ENCODE measurements at regions of chr3 and their contacts with region 1.

Region 1: DNA sequence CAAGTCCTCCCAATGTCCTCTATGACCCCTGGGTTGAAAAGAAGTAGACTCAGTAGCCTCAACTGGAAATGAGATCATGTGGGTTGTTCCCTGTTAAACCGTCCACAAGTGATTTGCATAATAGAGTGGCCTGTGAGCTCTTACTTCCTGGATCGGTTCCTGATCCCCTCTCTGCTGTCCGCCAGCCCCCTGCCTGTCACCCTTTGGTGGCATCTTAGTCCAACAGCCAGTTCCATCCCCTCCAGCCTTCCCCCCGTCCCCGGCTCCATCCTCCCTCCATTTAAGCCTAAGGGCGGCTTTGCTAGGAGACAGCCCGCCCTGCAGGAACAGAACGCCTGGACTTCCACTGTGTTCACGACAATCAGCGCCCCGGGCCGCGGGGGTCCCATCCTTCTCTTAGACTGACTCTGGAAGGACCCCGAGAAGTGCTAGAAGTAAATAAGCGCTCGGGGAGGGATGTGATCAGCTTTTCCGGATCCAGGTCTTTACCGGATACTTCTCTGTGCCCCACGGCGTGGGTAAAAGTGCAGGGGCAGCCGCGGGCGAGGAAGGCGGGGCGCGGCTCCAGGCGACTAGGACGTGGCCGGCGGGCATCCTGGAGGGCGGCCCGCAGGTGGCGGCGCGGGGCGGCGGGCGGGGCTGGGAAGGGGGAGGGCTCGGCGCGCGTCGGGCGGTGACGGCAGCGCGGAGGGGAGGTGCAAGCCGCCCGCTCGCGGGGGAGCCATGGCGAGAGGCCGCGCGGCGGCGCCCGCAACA is 51.2 kb upstream of the ULK4 start:
- DNase-seq: peak; percentile 66
- H3K4me3 Mint-ChIP-seq: peak overlapping the region; percentile 87
- H3K27ac Mint-ChIP-seq: peak overlapping the region; percentile 91
- H3K4me1 Mint-ChIP-seq: peaks cover 47% of the 10 kb centered on the region
- H3K27me3 Mint-ChIP-seq: no peaks in the 10 kb centered on the region

Region 2: GRCh38 chr3:40452876-40453730 is 1560.0 kb before region 1 on chr3:
- intact Hi-C with region 1: loop called (anchors 2 kb)
- DNase-seq: peak; percentile 95
- H3K4me3 Mint-ChIP-seq: peak overlapping the region; percentile 91
- H3K27ac Mint-ChIP-seq: peak overlapping the region; percentile 96
- H3K4me1 Mint-ChIP-seq: peaks cover 40% of the 10 kb centered on the region
- H3K27me3 Mint-ChIP-seq: no peaks in the 10 kb centered on the region

Region 3: DNA sequence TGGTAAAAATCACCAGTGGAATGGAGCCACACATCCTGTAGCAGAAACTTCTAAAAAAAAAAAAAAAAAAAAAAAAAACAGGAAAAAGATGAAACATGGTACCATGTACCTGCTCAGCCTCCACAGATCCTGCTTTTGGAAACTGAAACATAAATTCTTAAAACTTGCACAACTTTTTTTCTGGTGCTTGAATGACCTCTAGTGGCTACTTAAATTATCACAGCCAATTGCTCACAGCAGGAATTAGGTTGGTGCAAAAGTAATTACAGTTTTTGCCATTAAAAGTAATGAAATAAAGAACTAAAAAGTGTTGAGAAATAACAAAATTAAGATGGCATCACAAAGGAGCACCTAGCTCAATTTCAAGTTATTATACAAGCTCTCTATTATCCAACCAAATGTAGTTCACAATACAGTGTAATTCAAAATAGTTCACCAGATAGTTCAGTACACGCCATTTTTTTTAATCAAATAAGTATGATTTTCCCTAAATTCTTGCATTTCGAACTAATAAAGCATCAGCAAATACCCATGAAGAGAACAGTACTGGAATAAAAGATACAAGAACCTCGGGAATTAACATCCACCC is 131.8 kb before region 1 on chr3:
- intact Hi-C with region 1: no loop called
- DNase-seq: no peak
- H3K4me3 Mint-ChIP-seq: no peak overlapping the region
- H3K27ac Mint-ChIP-seq: no peak overlapping the region
- H3K4me1 Mint-ChIP-seq: no peaks in the 10 kb centered on the region
- H3K27me3 Mint-ChIP-seq: peaks cover 1% of the 10 kb centered on the region

Region 4: DNA sequence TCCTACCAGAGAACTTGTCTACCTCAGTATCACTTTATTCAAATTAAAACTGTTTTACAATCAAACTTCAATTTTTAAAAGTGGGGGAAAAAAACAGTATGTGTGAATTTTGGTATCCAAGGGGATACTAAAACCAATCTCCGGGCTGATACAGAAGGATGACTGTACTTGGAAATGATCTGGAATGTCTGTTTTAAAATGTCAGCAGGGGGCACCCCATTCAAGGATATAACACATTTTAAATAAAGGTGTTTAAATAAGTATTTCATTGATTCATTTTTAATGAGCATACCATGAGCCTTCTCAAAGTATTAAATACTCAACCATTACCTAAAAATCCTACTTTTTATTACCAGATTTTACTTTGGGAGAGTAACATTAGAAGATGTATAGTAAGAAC is 119.1 kb before region 1 on chr3:
- intact Hi-C with region 1: loop called (anchors 1 kb)
- DNase-seq: no peak
- H3K4me3 Mint-ChIP-seq: no peak overlapping the region
- H3K27ac Mint-ChIP-seq: no peak overlapping the region
- H3K4me1 Mint-ChIP-seq: no peaks in the 10 kb centered on the region
- H3K27me3 Mint-ChIP-seq: no peaks in the 10 kb centered on the region

Region 5: DNA sequence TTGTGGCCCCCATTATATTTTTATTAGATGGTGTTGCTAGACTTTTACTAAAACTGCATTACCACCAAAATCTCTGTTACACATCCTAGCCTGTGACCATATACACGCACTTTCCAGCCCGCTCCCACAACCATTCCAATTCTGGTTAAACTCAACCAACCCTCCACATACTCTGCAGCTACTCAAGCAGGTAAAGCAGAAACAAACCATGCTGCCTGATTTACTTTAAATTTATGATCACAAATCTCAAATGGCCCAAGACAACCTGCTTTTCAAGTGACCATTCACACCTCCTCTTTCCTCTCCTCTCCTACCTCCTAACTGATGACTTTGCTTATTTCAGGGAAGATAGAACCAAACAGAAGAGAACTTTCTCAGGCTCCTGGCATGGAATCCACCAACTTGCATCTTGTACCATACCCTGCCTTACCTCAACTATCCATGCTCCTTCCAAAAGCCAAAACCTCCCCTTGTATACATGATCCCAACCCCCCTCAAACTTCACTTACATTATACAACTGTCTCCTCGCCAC is 69.7 kb before region 1 on chr3:
- intact Hi-C with region 1: no loop called
- DNase-seq: no peak
- H3K4me3 Mint-ChIP-seq: no peak overlapping the region
- H3K27ac Mint-ChIP-seq: no peak overlapping the region
- H3K4me1 Mint-ChIP-seq: no peaks in the 10 kb centered on the region
- H3K27me3 Mint-ChIP-seq: no peaks in the 10 kb centered on the region

Region 6: DNA sequence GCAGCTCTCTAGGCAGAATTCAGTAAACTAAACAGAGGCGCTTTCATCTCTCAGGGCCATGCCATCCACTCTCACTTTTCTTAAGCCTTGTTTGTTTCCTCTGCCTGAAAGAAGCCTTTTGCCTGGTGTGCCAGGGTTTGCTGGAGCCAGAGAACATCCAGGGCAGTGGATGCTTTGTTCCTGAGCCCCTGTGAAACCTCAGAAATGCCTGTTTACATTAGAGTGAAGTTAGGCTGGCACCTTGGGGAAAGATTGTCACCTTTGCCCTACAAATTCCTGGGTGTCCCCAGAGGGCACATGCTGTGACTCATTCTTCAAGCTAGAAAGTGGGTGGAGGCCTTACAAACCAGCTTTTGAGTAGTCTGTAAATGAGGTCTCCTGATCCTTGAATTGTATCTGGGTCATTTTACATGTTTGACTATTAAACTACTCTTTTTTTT is 67.4 kb after region 1 on chr3:
- intact Hi-C with region 1: loop called (anchors 2 kb)
- DNase-seq: no peak
- H3K4me3 Mint-ChIP-seq: peak overlapping the region; percentile 38
- H3K27ac Mint-ChIP-seq: peak overlapping the region; percentile 84
- H3K4me1 Mint-ChIP-seq: peaks cover 51% of the 10 kb centered on the region
- H3K27me3 Mint-ChIP-seq: no peaks in the 10 kb centered on the region

Region 7: DNA sequence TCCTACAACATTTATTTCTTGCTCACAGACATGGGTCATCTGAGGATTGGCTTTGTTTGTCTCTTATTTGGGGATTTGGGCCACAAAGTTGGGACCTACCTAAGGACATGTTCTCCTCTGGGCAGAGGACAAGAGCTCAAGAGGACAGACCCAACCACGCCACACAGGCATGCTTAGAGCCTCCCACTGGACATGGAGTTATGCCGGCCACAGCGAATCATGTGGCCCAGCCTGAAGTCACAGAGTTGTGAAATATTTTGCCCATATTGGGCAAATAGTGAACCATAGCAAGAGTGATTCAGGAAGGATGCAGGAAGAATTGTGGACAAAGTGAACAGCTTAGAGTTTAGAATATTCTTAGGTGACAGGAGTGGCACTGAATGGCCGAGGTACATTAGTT is 87.9 kb after region 1 on chr3:
- intact Hi-C with region 1: loop called (anchors 1 kb)
- DNase-seq: no peak
- H3K4me3 Mint-ChIP-seq: no peak overlapping the region
- H3K27ac Mint-ChIP-seq: no peak overlapping the region
- H3K4me1 Mint-ChIP-seq: peaks cover 35% of the 10 kb centered on the region
- H3K27me3 Mint-ChIP-seq: no peaks in the 10 kb centered on the region

Region 8: DNA sequence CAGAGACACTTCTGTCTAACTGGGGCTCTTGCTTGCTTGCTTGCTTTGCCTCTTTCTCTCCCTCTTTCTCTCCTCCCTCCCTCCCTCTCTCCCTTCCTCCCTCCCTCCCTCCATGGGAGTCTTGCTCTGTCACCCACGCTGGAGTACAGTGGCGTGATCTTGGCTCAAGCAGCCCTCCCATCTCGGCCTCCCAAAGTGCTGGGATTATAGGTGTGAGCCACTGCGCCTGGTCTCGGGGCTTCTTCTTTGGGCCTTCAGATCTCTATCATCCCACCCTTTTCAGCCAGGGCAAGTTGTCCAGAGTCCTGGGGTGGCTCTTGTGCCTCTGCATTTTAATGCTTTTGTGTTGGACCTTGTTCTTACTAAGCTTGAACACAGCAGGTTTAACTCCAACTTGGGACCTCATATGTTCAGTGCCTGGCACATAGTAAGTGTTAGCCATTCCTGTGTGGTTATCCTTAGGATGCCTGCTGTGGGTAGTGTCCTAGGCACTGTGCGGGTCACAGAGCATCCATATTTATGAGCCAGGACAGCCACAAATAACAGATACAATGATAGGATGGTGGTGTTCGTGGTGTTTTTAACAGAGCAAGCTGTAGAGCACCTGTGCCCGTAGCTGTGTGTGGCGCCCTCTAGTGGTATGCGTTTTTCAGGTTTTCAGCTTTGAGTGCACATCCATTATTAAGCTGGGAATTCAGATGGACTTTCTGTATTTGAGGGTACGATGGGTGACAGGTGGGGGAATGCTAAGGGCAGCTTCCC is 177.8 kb after region 1 on chr3:
- intact Hi-C with region 1: loop called (anchors 2 kb)
- DNase-seq: peak; percentile 42
- H3K4me3 Mint-ChIP-seq: no peak overlapping the region
- H3K27ac Mint-ChIP-seq: no peak overlapping the region
- H3K4me1 Mint-ChIP-seq: peaks cover 30% of the 10 kb centered on the region
- H3K27me3 Mint-ChIP-seq: no peaks in the 10 kb centered on the region